ENCODE measurements at regions of chr3 and their contacts with region 1.

Region 1: GRCh38 chr3:45995236-45996192 is at the start of gene FYCO1:
- DNase-seq: peak; percentile 67 to 82
- H3K4me3 ChIP-seq: peak within 1 kb of the TSS; percentile 99
- H3K27ac ChIP-seq: peak within 1 kb of the TSS; percentile 34; the same call in 1 of the 2 replicates
- H3K4me1 ChIP-seq: peaks cover 7% of the 10 kb centered on the region; the same call in 1 of the 2 replicates
- H3K27me3 ChIP-seq: no peaks in the 10 kb centered on the region
- CTCF ChIP-seq: no peak
- total RNA-seq, gene FYCO1: 19.7 and 21.1 TPM in 2 replicates

Region 2: DNA sequence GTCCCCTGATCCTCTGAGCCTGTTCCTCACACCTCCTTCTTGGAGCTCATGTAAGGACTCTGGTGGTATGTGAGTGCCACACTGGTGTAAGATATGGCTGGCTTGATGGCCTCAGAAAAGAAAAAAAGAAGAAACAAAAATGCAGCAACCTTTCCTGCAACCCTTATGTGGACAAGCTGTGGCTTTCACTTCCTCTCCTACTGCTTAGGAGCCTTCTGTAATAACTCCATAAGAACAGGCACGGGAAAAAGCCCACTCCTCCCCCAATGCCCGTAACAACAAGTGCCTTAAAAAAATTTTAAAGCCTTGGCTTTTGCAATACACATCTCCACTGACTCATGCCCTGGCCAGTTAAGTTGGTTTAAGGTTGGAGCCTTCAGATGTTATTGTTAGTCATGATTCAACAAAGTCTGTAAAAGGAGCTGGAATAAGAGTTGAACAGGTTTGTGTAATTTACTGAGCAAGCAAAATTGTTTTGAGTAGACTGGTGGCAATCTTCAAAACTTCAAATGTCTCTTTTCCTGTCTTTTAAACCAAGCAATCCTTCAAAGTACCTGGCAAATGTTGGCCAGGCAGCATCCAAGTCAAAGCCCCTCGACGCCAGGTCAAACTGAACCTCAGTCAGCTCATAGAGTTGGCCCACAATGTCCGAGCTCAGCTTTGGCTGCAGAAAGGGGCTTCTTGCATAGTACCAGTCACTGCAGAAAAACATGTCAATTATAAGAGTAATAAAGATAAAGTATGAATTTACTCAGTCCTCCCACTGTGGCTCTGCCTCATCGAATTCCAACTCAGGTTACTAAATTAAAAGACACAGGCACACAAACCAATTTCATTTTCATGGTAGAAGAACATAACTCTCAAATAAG is 22.7 kb before region 1 on chr3:
- CTCF ChIA-PET with region 1: no interaction called
- POLR2A ChIA-PET with region 1: no interaction called
- intact Hi-C with region 1: loop called (anchors 2 kb)
- DNase-seq: peak; percentile 49 to 93
- H3K4me3 ChIP-seq: no peak overlapping the region
- H3K27ac ChIP-seq: peak overlapping the region; percentile 70
- H3K4me1 ChIP-seq: peaks cover 32% of the 10 kb centered on the region
- H3K27me3 ChIP-seq: no peaks in the 10 kb centered on the region
- CTCF ChIP-seq: no peak